ENCODE measurements at regions of chr4 and their contacts with region 1.

Region 1: GRCh38 chr4:139887962-139888735 is 222.5 kb downstream of the MGST2 start:
- DNase-seq: peak; percentile 84
- H3K4me3 Mint-ChIP-seq: peak overlapping the region; percentile 6
- H3K27ac Mint-ChIP-seq: peak overlapping the region; percentile 51
- H3K4me1 Mint-ChIP-seq: peaks cover 39% of the 10 kb centered on the region
- H3K27me3 Mint-ChIP-seq: no peaks in the 10 kb centered on the region
- CTCF ChIP-seq: no peak

Region 2: DNA sequence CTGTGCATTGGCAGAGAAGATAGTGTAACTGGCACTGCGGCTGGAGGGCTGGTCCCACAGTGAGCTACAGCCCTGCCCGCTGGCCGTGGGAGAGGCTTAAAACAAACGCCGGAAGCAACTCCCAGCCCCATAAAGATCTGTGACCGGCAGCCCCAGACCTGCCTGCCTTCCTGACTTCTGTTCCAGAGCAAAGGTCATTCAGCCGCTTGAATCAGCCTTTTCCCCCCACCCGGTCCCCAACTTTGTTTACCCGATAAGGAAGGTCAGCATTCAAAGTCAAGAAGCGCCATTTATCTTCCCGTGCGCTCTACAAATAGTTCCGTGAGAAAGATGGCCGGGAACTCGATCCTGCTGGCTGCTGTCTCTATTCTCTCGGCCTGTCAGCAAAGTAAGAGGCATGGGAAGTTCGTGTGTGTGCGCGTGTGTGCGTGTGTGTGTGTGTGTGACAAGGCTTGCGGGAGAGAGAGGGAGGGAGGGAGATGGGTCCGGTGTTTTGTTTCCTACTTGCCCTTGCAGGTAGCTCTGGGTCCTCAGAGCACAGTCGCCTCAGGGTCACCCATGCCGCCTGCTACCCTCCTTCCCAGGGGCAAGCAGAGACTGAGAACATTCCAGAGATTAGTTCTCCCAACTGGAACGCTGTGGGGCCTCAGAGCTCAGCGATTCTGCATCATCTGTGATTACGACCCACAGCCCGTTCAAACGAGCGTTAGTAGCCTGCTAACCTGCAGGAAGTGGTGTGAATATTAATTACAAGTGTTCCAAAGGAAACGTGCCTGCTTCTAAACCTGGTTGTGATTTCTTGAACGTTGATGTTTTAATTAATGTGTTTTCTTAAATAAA is 222.2 kb before region 1 on chr4 and contains the start of gene MGST2:
- CTCF ChIA-PET with region 1: interaction called, 3 read pairs
- POLR2A ChIA-PET with region 1: interaction called, 19 read pairs
- intact Hi-C with region 1: no loop called
- DNase-seq: peak; percentile 65
- H3K4me3 Mint-ChIP-seq: peak within 1 kb of the TSS; percentile 81
- H3K27ac Mint-ChIP-seq: peak within 1 kb of the TSS; percentile 93
- H3K4me1 Mint-ChIP-seq: peaks cover 23% of the 10 kb centered on the region
- H3K27me3 Mint-ChIP-seq: no peaks in the 10 kb centered on the region
- CTCF ChIP-seq: no peak
- total RNA-seq, gene MGST2: 27.5 and 41.5 TPM in 2 replicates

Region 3: DNA sequence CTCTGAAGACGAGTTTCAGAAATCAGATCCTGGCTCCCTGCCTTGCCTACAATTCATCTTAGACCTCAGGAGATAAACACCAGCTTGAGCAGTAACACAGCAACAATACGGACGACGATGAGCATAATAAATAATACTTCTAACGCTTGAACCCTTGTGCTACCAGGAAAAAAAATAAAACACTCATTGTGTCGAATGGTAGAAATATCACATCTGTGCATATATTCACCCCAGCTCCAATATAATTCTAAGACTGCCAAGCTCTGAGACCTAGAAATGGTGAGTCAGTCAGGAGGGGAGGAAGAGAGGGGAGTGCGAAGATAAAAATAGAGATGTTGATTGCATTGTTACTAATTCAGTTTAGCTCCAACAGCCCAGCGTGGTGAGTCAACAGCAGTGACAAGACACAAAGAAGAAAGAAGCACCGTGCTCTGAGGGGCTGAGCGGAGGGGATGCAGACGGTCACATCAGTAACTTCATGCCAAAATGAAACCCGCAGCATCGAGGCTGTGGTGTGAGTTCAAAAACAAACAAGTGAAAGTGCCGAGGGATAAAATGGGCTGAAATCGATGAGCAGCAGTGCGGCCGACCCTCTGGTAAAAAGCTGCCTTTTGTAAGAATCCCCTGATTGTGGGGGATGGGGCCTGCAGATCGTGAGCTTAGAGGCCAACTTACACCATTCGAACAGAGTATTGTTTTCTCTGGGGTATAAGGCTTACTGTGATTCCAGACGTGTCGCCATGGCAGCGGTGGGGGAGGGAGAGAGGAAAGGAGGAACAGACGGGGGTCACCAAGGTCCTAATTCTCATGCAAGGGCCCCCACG is 72.2 kb before region 1 on chr4:
- CTCF ChIA-PET with region 1: no interaction called
- POLR2A ChIA-PET with region 1: interaction called, 18 read pairs
- intact Hi-C with region 1: no loop called
- DNase-seq: peak; percentile 67
- H3K4me3 Mint-ChIP-seq: no peak overlapping the region
- H3K27ac Mint-ChIP-seq: peak overlapping the region; percentile 17
- H3K4me1 Mint-ChIP-seq: peaks cover 17% of the 10 kb centered on the region
- H3K27me3 Mint-ChIP-seq: no peaks in the 10 kb centered on the region
- CTCF ChIP-seq: no peak

Region 4: DNA sequence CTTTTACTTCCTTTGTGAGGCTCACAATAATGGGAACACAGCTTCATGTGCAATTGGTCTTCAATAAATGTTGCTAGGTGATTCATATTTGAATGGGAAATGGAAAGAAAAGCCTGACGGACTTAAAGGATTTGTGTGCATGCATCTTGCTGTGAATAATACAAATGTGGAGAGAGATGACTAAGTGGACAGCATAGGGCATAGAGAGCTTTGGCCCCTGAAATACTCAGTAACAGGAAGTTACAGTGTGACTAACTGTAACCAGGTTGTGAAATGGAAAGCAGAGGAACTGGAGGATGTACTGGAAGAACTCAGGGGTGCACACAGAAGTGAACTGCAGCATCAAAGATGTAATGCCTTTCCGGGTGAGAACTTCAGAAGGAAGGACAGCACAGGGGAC is 15.9 kb before region 1 on chr4:
- CTCF ChIA-PET with region 1: interaction called, 3 read pairs
- POLR2A ChIA-PET with region 1: interaction called, 43 read pairs
- intact Hi-C with region 1: no loop called
- DNase-seq: peak; percentile 90
- H3K4me3 Mint-ChIP-seq: no peak overlapping the region
- H3K27ac Mint-ChIP-seq: peak overlapping the region; percentile 9
- H3K4me1 Mint-ChIP-seq: peaks cover 8% of the 10 kb centered on the region
- H3K27me3 Mint-ChIP-seq: no peaks in the 10 kb centered on the region
- CTCF ChIP-seq: no peak

Region 5: GRCh38 chr4:139901531-139902320 is 13.6 kb after region 1 on chr4:
- CTCF ChIA-PET with region 1: interaction called, 4 read pairs
- POLR2A ChIA-PET with region 1: interaction called, 22 read pairs
- intact Hi-C with region 1: no loop called
- DNase-seq: peak; percentile 22
- H3K4me3 Mint-ChIP-seq: peak overlapping the region; percentile 13
- H3K27ac Mint-ChIP-seq: peak overlapping the region; percentile 36
- H3K4me1 Mint-ChIP-seq: peaks cover 16% of the 10 kb centered on the region
- H3K27me3 Mint-ChIP-seq: no peaks in the 10 kb centered on the region
- CTCF ChIP-seq: no peak